Caco-2 (cell line): ENCODE measurements at regions of chr2 and their contacts with region 1.

Region 1: GRCh38 chr2:24827321-24828237 is 34.4 kb downstream of the CENPO start:
- DNase-seq: peak; percentile 85 to 86
- H3K4me3 ChIP-seq: no peak overlapping the region
- H3K4me3 Mint-ChIP-seq: no peak overlapping the region
- H3K27ac Mint-ChIP-seq: peak overlapping the region; percentile 22
- H3K4me1 ChIP-seq: no peaks in the 10 kb centered on the region
- H3K4me1 Mint-ChIP-seq: peaks cover 8% of the 10 kb centered on the region
- H3K27me3 ChIP-seq: no peaks in the 10 kb centered on the region
- H3K27me3 Mint-ChIP-seq: no peaks in the 10 kb centered on the region
- CTCF ChIP-seq: peak; percentile 89 to 94

Region 2: GRCh38 chr2:24228470-24228869 is 599.1 kb before region 1 on chr2:
- CTCF ChIA-PET with region 1: interaction called, 10 read pairs
- POLR2A ChIA-PET with region 1: no interaction called
- intact Hi-C with region 1: no loop called
- DNase-seq: peak in 1 of 2 experiments; percentile 17
- H3K4me3 ChIP-seq: no peak overlapping the region
- H3K4me3 Mint-ChIP-seq: no peak overlapping the region
- H3K27ac Mint-ChIP-seq: no peak overlapping the region
- H3K4me1 ChIP-seq: no peaks in the 10 kb centered on the region
- H3K4me1 Mint-ChIP-seq: no peaks in the 10 kb centered on the region
- H3K27me3 ChIP-seq: no peaks in the 10 kb centered on the region
- H3K27me3 Mint-ChIP-seq: no peaks in the 10 kb centered on the region
- CTCF ChIP-seq: peak; percentile 46 to 50

Region 3: GRCh38 chr2:24409700-24410556 is 417.7 kb before region 1 on chr2:
- CTCF ChIA-PET with region 1: interaction called, 37 read pairs
- POLR2A ChIA-PET with region 1: no interaction called
- intact Hi-C with region 1: loop called (anchors 1 kb)
- DNase-seq: peak; percentile 49 to 66
- H3K4me3 ChIP-seq: no peak overlapping the region
- H3K4me3 Mint-ChIP-seq: no peak overlapping the region
- H3K27ac Mint-ChIP-seq: no peak overlapping the region
- H3K4me1 ChIP-seq: no peaks in the 10 kb centered on the region
- H3K4me1 Mint-ChIP-seq: no peaks in the 10 kb centered on the region
- H3K27me3 ChIP-seq: no peaks in the 10 kb centered on the region
- H3K27me3 Mint-ChIP-seq: no peaks in the 10 kb centered on the region
- CTCF ChIP-seq: peak; percentile 80 to 90

Region 4: GRCh38 chr2:24421668-24422067 is 405.9 kb before region 1 on chr2:
- CTCF ChIA-PET with region 1: interaction called, 3 read pairs
- POLR2A ChIA-PET with region 1: no interaction called
- intact Hi-C with region 1: loop called (anchors 1 kb)
- DNase-seq: peak; percentile 78 to 82
- H3K4me3 ChIP-seq: no peak overlapping the region
- H3K4me3 Mint-ChIP-seq: no peak overlapping the region
- H3K27ac Mint-ChIP-seq: no peak overlapping the region
- H3K4me1 ChIP-seq: peaks cover 13% of the 10 kb centered on the region
- H3K4me1 Mint-ChIP-seq: peaks cover 9% of the 10 kb centered on the region
- H3K27me3 ChIP-seq: no peaks in the 10 kb centered on the region
- H3K27me3 Mint-ChIP-seq: no peaks in the 10 kb centered on the region
- CTCF ChIP-seq: peak; percentile 58 to 60

Region 5: GRCh38 chr2:24613154-24613814 is 214.3 kb before region 1 on chr2:
- CTCF ChIA-PET with region 1: interaction called, 4 read pairs
- POLR2A ChIA-PET with region 1: no interaction called
- intact Hi-C with region 1: loop called (anchors 5 kb)
- DNase-seq: peak in 1 of 2 experiments; percentile 24
- H3K4me3 ChIP-seq: no peak overlapping the region
- H3K4me3 Mint-ChIP-seq: no peak overlapping the region
- H3K27ac Mint-ChIP-seq: no peak overlapping the region
- H3K4me1 ChIP-seq: no peaks in the 10 kb centered on the region
- H3K4me1 Mint-ChIP-seq: no peaks in the 10 kb centered on the region
- H3K27me3 ChIP-seq: no peaks in the 10 kb centered on the region
- H3K27me3 Mint-ChIP-seq: no peaks in the 10 kb centered on the region
- CTCF ChIP-seq: peak in 1 of 2 experiments; percentile 18

Region 6: DNA sequence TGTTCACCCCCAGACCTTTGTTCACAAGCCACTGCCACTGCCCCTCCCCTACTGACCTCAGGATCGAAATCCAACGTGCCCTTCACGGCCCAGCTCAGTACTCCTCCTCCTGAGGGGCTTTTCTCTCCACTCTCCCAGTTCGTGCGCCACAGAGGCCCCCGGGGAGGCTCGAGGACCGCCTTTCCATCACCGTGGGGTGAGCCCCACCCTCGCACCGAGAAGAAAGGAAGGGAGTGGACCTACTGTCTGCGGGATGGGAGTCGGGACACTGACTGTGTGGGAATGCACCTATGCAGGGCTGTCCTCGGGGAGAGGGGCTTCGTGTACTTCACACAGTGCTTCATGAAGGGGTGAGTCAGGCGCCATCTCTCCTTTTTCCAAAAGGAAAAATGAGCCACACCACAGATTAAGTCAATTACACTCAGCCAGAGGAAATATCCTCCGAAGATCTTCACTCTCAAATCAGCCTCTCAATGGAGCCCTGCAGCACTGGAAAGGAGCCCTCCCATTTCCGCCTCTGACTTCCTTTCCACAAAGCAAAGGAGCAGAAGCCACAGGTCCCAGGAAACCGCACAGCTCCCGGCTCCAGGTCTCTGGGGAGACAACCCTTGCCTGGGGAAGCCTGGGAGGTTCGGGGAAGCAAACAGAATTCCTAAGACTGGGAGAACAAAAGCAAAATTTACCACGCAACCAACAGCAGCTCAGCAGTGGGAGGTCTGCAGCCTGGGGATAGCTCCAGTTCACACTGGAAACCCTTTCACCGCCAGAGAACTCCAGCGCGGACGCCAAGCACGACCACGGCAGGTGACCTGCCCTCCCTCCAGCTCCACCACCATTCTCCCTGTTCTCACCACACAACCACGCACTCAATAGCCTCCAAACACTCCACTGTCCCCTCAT is 70.8 kb after region 1 on chr2:
- CTCF ChIA-PET with region 1: no interaction called
- POLR2A ChIA-PET with region 1: no interaction called
- intact Hi-C with region 1: no loop called
- DNase-seq: no peak
- H3K4me3 ChIP-seq: no peak overlapping the region
- H3K4me3 Mint-ChIP-seq: no peak overlapping the region
- H3K27ac Mint-ChIP-seq: no peak overlapping the region
- H3K4me1 ChIP-seq: 0 out of 2 replicates have a peak, but pooled peaks cover 4% of the 10 kb centered on the region
- H3K4me1 Mint-ChIP-seq: peaks cover 7% of the 10 kb centered on the region
- H3K27me3 ChIP-seq: no peaks in the 10 kb centered on the region
- H3K27me3 Mint-ChIP-seq: no peaks in the 10 kb centered on the region
- CTCF ChIP-seq: no peak

Region 7: GRCh38 chr2:25131567-25132298 is 304.2 kb after region 1 on chr2:
- CTCF ChIA-PET with region 1: interaction called, 11 read pairs
- POLR2A ChIA-PET with region 1: no interaction called
- intact Hi-C with region 1: loop called (anchors 5 kb)
- DNase-seq: peak; percentile 55 to 76
- H3K4me3 ChIP-seq: peak overlapping the region; percentile 27
- H3K4me3 Mint-ChIP-seq: peak overlapping the region; percentile 76
- H3K27ac Mint-ChIP-seq: peak overlapping the region; percentile 49
- H3K4me1 ChIP-seq: peaks cover 16% of the 10 kb centered on the region
- H3K4me1 Mint-ChIP-seq: peaks cover 20% of the 10 kb centered on the region
- H3K27me3 ChIP-seq: no peaks in the 10 kb centered on the region
- H3K27me3 Mint-ChIP-seq: no peaks in the 10 kb centered on the region
- CTCF ChIP-seq: no peak

Region 8: DNA sequence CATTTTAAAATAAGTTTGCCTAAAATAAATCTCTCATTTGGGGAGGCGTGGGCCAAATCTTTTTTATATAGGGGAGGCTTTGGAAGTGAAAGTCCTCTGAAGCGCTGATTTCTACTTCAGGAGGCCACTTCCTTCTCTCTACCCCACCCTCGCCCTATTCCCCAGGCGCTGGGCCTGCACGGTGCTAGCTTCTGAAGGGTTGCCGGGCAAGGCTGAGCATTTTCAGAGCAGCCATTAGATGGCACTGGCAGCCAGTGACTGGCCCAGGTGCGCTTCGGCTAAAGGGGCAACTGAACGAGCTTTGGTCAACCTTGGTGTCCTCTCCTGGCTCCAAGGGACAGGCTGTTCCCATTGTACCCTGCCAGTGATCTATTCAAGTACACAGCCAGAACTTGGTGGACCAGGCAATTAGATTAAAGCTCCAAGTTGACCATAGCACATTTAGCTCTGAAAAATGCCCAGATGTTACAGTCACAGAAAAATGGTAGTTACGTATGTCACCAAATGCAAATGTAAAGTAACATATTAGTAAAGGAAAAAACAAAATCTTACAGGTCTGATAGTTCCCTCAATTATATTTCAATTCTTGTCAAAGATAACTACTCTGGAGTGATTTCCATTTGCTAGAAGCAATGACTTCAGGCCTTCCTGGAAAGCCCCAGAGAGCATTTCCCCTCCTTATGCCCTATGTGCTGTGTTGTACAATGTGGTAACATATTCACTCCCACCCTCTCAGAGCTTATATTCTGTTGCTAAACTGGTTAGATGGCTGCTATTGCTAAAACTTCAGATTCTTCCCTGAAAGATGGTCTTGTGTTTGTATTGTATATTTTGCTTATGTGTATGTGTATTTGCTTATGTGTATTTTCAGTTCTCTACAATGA is 338.7 kb after region 1 on chr2:
- CTCF ChIA-PET with region 1: interaction called, 10 read pairs
- POLR2A ChIA-PET with region 1: no interaction called
- intact Hi-C with region 1: no loop called
- DNase-seq: peak; percentile 50 to 63
- H3K4me3 ChIP-seq: no peak overlapping the region
- H3K4me3 Mint-ChIP-seq: no peak overlapping the region
- H3K27ac Mint-ChIP-seq: no peak overlapping the region
- H3K4me1 ChIP-seq: peaks cover 6% of the 10 kb centered on the region; the same call in 1 of the 2 replicates
- H3K4me1 Mint-ChIP-seq: no peaks in the 10 kb centered on the region
- H3K27me3 ChIP-seq: no peaks in the 10 kb centered on the region
- H3K27me3 Mint-ChIP-seq: peaks cover 4% of the 10 kb centered on the region
- CTCF ChIP-seq: peak; percentile 47 to 52